Activated CD4-positive, alpha-beta T cell treated with anti-CD3 and anti-CD28 coated beads, Interleukin-2, amount 10 ng/mL, durations not matched to agents 24 days and 14 days (primary cell): ENCODE measurements at regions of chr11 and their contacts with region 1.

Region 1: DNA sequence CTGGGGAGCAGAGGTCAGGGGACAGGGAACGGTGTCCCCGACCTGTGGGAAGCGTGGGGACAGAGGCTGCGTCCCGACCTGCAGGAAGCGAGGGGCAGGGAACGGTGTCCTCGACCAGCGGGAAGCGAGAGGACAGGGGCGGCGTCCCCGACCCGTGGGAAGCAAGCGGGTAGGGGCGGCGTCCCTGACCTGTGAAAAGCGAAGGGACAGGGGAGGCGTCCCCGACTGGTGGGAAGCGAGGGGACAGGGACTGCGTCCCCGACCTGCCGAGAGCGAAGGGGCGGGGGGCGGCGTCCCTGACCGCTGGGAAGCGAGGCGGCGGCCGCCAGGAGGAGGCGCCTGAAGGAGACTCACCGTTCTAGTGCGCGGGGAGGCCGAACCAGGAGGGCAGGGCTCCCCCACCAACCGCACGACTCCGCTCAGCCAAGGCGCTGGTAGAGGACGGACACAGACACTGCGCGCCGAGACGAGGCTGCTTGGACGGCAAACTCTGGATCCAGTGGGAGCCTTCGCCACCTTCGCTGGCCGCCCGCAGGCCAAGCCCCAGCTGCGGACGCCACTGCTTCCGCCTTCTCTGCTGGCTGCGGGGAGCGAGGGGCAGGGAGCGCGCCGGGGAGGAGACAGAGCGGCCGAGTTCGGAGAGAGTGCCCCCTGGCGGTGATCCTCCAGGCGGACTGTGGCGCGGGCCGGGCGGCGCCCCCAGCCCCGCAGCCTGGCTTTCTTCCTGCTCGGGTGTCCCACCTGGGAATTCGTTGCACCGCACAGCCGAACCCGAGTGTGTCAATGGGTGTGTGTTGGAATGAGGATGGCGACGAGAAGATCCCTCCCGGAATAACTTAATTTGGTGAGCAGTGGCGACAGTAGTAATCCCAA is at the start of gene TRAF6:
- DNase-seq: peak; percentile 97
- H3K4me3 Mint-ChIP-seq: peak within 1 kb of the TSS; percentile 98
- H3K27ac Mint-ChIP-seq: peak within 1 kb of the TSS; percentile 90
- H3K4me1 Mint-ChIP-seq: peaks cover 20% of the 10 kb centered on the region
- H3K27me3 Mint-ChIP-seq: peaks cover 22% of the 10 kb centered on the region
- total RNA-seq, gene TRAF6: 10.9 and 11.5 TPM in 2 replicates

Region 2: GRCh38 chr11:36558571-36559413 is 48.9 kb after region 1 on chr11:
- intact Hi-C with region 1: loop called (anchors 5 kb)
- DNase-seq: no peak
- H3K4me3 Mint-ChIP-seq: peak overlapping the region; percentile 60
- H3K27ac Mint-ChIP-seq: peak overlapping the region; percentile 84
- H3K4me1 Mint-ChIP-seq: peaks cover 22% of the 10 kb centered on the region
- H3K27me3 Mint-ChIP-seq: peaks cover 17% of the 10 kb centered on the region

Region 3: GRCh38 chr11:36746886-36747710 is 237.2 kb after region 1 on chr11:
- intact Hi-C with region 1: loop called (anchors 2 kb)
- DNase-seq: peak; percentile 96
- H3K4me3 Mint-ChIP-seq: no peak overlapping the region
- H3K27ac Mint-ChIP-seq: no peak overlapping the region
- H3K4me1 Mint-ChIP-seq: peaks cover 2% of the 10 kb centered on the region
- H3K27me3 Mint-ChIP-seq: peaks cover 12% of the 10 kb centered on the region